ENCODE measurements at regions of chr6 and their contacts with region 1.

Region 1: GRCh38 chr6:113632220-113632864 is 224.8 kb upstream of the MARCKS start:
- DNase-seq: no peak
- ATAC-seq: peak; percentile 32
- H3K4me3 Mint-ChIP-seq: peak overlapping the region; percentile 87
- H3K27ac Mint-ChIP-seq: peak overlapping the region; percentile 99
- H3K4me1 Mint-ChIP-seq: peaks cover 88% of the 10 kb centered on the region
- H3K27me3 Mint-ChIP-seq: no peaks in the 10 kb centered on the region
- CTCF ChIP-seq: no peak

Region 2: GRCh38 chr6:111873178-111874024 is 1758.9 kb before region 1 on chr6 and contains the start of gene FYN:
- CTCF ChIA-PET with region 1: no interaction called
- POLR2A ChIA-PET with region 1: no interaction called
- intact Hi-C with region 1: loop called (anchors 5 kb)
- DNase-seq: peak; percentile 97
- ATAC-seq: peak; percentile 94
- H3K4me3 Mint-ChIP-seq: peak within 1 kb of the TSS; percentile 93
- H3K27ac Mint-ChIP-seq: peak within 1 kb of the TSS; percentile 90
- H3K4me1 Mint-ChIP-seq: peaks cover 44% of the 10 kb centered on the region
- H3K27me3 Mint-ChIP-seq: no peaks in the 10 kb centered on the region
- CTCF ChIP-seq: no peak
- total RNA-seq, gene FYN: 57.8 and 64.7 TPM in 2 replicates

Region 3: GRCh38 chr6:112780498-112781096 is 851.7 kb before region 1 on chr6:
- CTCF ChIA-PET with region 1: no interaction called
- POLR2A ChIA-PET with region 1: no interaction called
- intact Hi-C with region 1: loop called (anchors 10 kb)
- DNase-seq: peak; percentile 23
- ATAC-seq: peak; percentile 80
- H3K4me3 Mint-ChIP-seq: no peak overlapping the region
- H3K27ac Mint-ChIP-seq: no peak overlapping the region
- H3K4me1 Mint-ChIP-seq: peaks cover 3% of the 10 kb centered on the region
- H3K27me3 Mint-ChIP-seq: no peaks in the 10 kb centered on the region
- CTCF ChIP-seq: peak; percentile 49

Region 4: DNA sequence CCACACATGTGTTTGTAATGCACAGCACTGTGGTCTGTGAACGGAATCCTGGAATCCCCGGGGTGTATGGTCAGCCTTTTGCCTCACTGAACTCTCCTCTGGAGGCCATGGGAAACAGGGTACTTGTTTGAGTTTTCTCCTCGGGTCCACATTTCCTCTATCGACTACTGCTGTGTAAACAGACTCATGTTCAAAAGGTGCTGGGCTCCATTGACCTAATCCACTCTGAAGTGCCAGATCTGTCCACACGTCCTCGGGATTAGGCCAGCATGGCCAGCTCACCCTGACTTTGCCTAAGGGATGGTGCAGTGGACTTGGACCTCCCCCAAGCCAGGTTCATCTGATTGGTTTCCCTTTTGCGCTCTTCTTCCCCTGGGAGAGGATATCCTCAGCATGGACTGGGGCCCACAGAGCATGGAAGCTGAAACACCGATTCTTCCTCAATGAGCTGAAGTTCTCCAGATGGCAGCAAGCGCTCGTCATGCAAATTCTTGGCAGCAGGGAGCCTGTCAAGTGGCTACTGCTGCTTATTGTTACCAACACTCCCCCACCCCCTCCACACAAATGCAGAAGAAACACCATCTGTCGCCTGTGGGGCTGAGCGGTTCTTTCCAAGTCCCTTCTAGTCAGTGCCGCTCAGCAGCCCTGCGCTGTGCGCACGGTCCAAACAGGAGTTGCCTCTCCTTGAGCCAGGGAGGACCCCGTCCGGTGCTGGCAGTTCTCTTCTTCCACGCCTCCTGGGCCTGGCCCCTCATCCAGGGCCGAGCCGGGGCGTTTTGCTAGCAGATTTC is 67.8 kb before region 1 on chr6:
- CTCF ChIA-PET with region 1: no interaction called
- POLR2A ChIA-PET with region 1: interaction called, 3 read pairs
- intact Hi-C with region 1: loop called (anchors 2 kb)
- DNase-seq: peak; percentile 30
- ATAC-seq: peak; percentile 91
- H3K4me3 Mint-ChIP-seq: peak overlapping the region; percentile 64
- H3K27ac Mint-ChIP-seq: no peak overlapping the region
- H3K4me1 Mint-ChIP-seq: peaks cover 20% of the 10 kb centered on the region
- H3K27me3 Mint-ChIP-seq: no peaks in the 10 kb centered on the region
- CTCF ChIP-seq: no peak

Region 5: GRCh38 chr6:113651120-113651519 is 18.8 kb after region 1 on chr6:
- CTCF ChIA-PET with region 1: no interaction called
- POLR2A ChIA-PET with region 1: interaction called, 17 read pairs
- intact Hi-C with region 1: loop called (anchors 1 kb)
- DNase-seq: no peak
- ATAC-seq: no peak
- H3K4me3 Mint-ChIP-seq: peak overlapping the region; percentile 19
- H3K27ac Mint-ChIP-seq: no peak overlapping the region
- H3K4me1 Mint-ChIP-seq: peaks cover 72% of the 10 kb centered on the region
- H3K27me3 Mint-ChIP-seq: no peaks in the 10 kb centered on the region
- CTCF ChIP-seq: no peak

Region 6: GRCh38 chr6:113739066-113739640 is 106.8 kb after region 1 on chr6:
- CTCF ChIA-PET with region 1: no interaction called
- POLR2A ChIA-PET with region 1: no interaction called
- intact Hi-C with region 1: no loop called
- DNase-seq: no peak
- ATAC-seq: no peak
- H3K4me3 Mint-ChIP-seq: no peak overlapping the region
- H3K27ac Mint-ChIP-seq: no peak overlapping the region
- H3K4me1 Mint-ChIP-seq: peaks cover 7% of the 10 kb centered on the region
- H3K27me3 Mint-ChIP-seq: no peaks in the 10 kb centered on the region
- CTCF ChIP-seq: no peak

Region 7: DNA sequence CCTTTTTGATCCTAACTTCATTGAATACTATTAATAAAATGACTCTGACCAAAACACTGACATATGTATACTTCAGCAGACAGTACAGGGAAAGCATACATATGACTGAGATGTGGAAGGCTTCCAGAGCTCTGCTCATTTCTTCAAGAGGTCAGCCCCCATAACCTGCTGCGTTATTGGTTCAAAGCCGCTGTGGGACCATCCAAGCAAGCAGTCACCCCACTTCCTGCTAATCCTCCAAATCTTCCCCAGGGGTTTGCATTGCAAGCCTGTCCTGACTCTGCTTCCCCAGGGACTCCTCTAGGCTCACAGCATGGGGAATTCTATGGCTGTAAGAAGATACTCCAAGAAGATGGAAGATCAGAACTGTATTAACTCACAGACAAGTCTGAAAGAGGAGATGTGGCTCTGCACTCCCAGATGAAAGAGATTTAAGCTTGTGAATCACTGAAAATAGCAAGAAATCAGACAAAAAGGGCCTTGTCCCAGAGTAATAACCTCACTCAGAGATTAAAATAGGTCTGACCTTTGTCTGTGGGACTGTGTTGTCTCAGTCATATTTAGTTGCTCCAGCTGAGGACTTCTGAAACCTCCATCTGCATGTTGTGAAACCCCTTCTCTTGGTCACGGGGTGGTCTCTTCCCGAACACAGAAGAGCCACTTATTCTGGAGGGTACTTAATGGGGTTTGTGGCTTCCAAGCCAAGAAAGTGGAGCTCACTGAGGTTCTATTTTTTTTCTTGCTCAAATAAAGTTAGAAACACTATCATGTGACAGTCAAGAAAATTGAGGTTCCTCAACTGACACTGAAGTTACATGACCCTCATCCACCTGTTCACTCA is 123.3 kb after region 1 on chr6:
- CTCF ChIA-PET with region 1: no interaction called
- POLR2A ChIA-PET with region 1: no interaction called
- intact Hi-C with region 1: loop called (anchors 2 kb)
- DNase-seq: peak; percentile 25
- ATAC-seq: peak; percentile 86
- H3K4me3 Mint-ChIP-seq: peak overlapping the region; percentile 60
- H3K27ac Mint-ChIP-seq: peak overlapping the region; percentile 82
- H3K4me1 Mint-ChIP-seq: peaks cover 46% of the 10 kb centered on the region
- H3K27me3 Mint-ChIP-seq: no peaks in the 10 kb centered on the region
- CTCF ChIP-seq: no peak